Dendritic cell treated with granulocyte-macrophage colony-stimulating factor and Interleukin-4, amounts not matched to agents 40 ng/mL and 50 ng/mL, for 4 days (primary cell): ENCODE measurements at regions of chr2 and their contacts with region 1.

Region 1: DNA sequence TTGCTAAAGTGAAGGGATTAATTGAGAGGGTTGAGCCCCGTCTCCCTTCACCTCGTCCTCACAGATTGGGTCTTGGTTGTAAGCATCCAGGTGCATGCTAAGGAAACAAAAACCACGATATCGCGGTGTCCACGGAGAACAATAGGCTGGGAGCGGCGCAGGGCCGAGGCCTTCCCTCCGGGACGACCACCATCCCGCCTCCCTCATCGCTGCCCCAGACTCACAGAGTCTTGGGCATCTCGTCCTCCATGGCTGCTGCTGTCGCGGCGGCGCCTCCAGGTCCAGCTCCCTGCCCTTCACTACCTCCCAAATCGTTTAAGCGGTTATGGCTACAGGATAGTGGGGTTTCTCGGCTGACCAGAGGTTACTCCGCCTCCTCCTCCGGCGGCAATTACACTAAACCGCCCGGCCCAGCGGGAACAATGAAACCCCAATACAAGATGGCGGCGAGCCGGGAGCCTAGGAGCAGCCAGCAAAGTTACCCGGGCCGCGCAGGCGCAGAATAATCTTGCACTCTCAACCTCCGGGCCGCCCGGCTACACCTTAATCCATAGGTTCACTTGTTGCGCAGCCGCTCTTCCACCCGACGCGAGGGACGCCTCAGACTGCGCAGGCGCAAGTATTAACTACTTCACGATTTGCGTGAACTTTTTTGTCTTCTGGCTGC is at the start of gene TIA1:
- H3K4me3 Mint-ChIP-seq: peak within 1 kb of the TSS; percentile 87
- H3K27ac Mint-ChIP-seq: peak within 1 kb of the TSS; percentile 97
- H3K4me1 Mint-ChIP-seq: peaks cover 25% of the 10 kb centered on the region
- H3K27me3 Mint-ChIP-seq: no peaks in the 10 kb centered on the region

Region 2: DNA sequence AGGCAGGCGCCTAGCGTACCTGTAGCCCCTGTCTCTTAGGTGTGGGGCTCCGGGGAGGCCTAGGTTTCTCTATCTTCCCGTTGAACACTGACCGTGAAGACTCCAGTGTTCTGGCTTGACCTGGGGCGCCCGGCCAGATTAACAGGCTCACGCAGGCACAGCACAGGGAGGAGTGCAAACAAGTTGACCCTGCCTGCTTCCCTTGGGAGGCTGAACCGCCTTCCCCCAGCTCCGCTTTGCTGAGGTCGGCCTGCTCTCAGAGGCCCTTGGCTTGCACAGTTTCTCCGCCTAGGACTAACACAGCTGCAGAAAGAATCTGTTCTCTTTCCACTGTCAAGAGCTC is 10.2 kb after region 1 on chr2:
- intact Hi-C with region 1: loop called (anchors 1 kb)
- H3K4me3 Mint-ChIP-seq: peak overlapping the region; percentile 93
- H3K27ac Mint-ChIP-seq: peak overlapping the region; percentile 86
- H3K4me1 Mint-ChIP-seq: peaks cover 27% of the 10 kb centered on the region
- H3K27me3 Mint-ChIP-seq: no peaks in the 10 kb centered on the region